Activated T-helper 1 cell treated with anti-CD3 and anti-CD28 coated beads, Interleukin-12 subunit alpha, Interleukin-12 subunit beta, Interleukin-2, Interleukin-4 antibody, amounts not matched to agents 30 ng/mL and 10 ng/mL and 1 ng/mL, durations not matched to agents 14 hours and 24 hours and 36 hours (primary cell): ENCODE measurements at regions of chr10 and their contacts with region 1.

Region 1: DNA sequence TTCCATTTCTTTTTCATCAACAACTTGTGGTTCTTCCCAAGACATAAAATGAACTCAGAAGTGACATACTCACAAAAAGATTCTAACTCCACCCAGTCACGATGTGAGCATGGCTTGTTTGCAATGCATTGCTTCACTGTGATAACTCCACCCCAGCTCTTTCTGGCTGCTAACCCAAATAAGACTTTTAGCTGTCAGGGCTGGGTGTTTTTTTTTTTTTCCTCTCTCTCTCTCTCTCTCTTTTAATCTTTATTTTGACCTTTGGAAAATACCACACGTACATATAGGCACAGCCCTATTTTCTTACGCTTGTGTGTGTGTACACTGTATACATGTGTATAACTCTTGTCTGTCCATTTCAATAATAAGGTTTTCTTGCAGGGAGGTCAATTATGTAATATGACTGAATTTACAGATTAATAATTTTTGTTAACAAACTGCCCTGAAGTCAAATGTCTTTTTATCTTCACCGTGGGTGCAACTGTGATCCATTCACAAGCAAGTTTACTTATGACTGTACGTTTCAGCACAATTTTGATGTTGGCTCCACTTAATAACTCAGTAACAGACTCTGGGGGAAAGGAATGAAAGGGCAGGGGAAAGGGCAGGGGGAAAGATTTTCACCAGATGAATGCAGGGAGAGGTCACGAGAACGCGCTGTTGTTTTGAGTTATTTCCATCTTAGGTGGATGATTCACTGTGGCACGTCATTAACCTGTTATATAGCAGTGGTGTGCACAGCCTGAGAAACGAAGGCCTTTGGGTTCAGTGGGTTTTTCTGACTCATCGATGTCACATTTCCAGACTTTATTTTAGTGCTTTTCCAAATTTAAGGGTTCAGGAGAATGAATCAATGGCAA is 49.1 kb downstream of the APBB1IP start:
- DNase-seq: peak; percentile 65
- H3K4me3 Mint-ChIP-seq: peak overlapping the region; percentile 73
- H3K27ac Mint-ChIP-seq: peak overlapping the region; percentile 97
- H3K4me1 Mint-ChIP-seq: peaks cover 61% of the 10 kb centered on the region
- H3K27me3 Mint-ChIP-seq: no peaks in the 10 kb centered on the region

Region 2: GRCh38 chr10:26430641-26431164 is 56.5 kb before region 1 on chr10:
- intact Hi-C with region 1: loop called (anchors 1 kb)
- DNase-seq: peak; percentile 43
- H3K4me3 Mint-ChIP-seq: peak overlapping the region; percentile 57
- H3K27ac Mint-ChIP-seq: peak overlapping the region; percentile 81
- H3K4me1 Mint-ChIP-seq: peaks cover 16% of the 10 kb centered on the region
- H3K27me3 Mint-ChIP-seq: peaks cover 3% of the 10 kb centered on the region

Region 3: GRCh38 chr10:26448706-26449435 is 38.4 kb before region 1 on chr10:
- intact Hi-C with region 1: loop called (anchors 1 kb)
- DNase-seq: peak; percentile 79
- H3K4me3 Mint-ChIP-seq: peak overlapping the region; percentile 68
- H3K27ac Mint-ChIP-seq: peak overlapping the region; percentile 93
- H3K4me1 Mint-ChIP-seq: peaks cover 67% of the 10 kb centered on the region
- H3K27me3 Mint-ChIP-seq: no peaks in the 10 kb centered on the region

Region 4: GRCh38 chr10:26474026-26474425 is 13.2 kb before region 1 on chr10:
- intact Hi-C with region 1: loop called (anchors 1 kb)
- DNase-seq: no peak
- H3K4me3 Mint-ChIP-seq: no peak overlapping the region
- H3K27ac Mint-ChIP-seq: peak overlapping the region; percentile 18
- H3K4me1 Mint-ChIP-seq: peaks cover 77% of the 10 kb centered on the region
- H3K27me3 Mint-ChIP-seq: no peaks in the 10 kb centered on the region

Region 5: GRCh38 chr10:26593896-26594295 is 106.7 kb after region 1 on chr10:
- intact Hi-C with region 1: no loop called
- DNase-seq: no peak
- H3K4me3 Mint-ChIP-seq: no peak overlapping the region
- H3K27ac Mint-ChIP-seq: no peak overlapping the region
- H3K4me1 Mint-ChIP-seq: no peaks in the 10 kb centered on the region
- H3K27me3 Mint-ChIP-seq: no peaks in the 10 kb centered on the region

Region 6: GRCh38 chr10:26737730-26738129 is 250.5 kb after region 1 on chr10:
- intact Hi-C with region 1: loop called (anchors 1 kb)
- DNase-seq: peak; percentile 59
- H3K4me3 Mint-ChIP-seq: peak overlapping the region; percentile 45
- H3K27ac Mint-ChIP-seq: peak overlapping the region; percentile 99
- H3K4me1 Mint-ChIP-seq: peaks cover 74% of the 10 kb centered on the region
- H3K27me3 Mint-ChIP-seq: no peaks in the 10 kb centered on the region

Region 7: GRCh38 chr10:27155066-27155754 is 668.0 kb after region 1 on chr10 and contains the start of gene MASTL:
- intact Hi-C with region 1: loop called (anchors 1 kb)
- DNase-seq: peak; percentile 93
- H3K4me3 Mint-ChIP-seq: peak within 1 kb of the TSS; percentile 99
- H3K27ac Mint-ChIP-seq: peak within 1 kb of the TSS; percentile 99
- H3K4me1 Mint-ChIP-seq: peaks cover 42% of the 10 kb centered on the region
- H3K27me3 Mint-ChIP-seq: no peaks in the 10 kb centered on the region
- total RNA-seq, gene MASTL: 33.2 and 33.7 TPM in 2 replicates

Region 8: GRCh38 chr10:28334296-28334695 is 1847.1 kb after region 1 on chr10:
- intact Hi-C with region 1: loop called (anchors 2 kb)
- DNase-seq: peak; percentile 66
- H3K4me3 Mint-ChIP-seq: peak overlapping the region; percentile 81
- H3K27ac Mint-ChIP-seq: peak overlapping the region; percentile 99
- H3K4me1 Mint-ChIP-seq: peaks cover 67% of the 10 kb centered on the region
- H3K27me3 Mint-ChIP-seq: peaks cover 21% of the 10 kb centered on the region